Activated CD4-positive, alpha-beta memory T cell treated with anti-CD3 and anti-CD28 coated beads for 36 hours (primary cell): ENCODE measurements at regions of chr12 and their contacts with region 1.

Region 1: DNA sequence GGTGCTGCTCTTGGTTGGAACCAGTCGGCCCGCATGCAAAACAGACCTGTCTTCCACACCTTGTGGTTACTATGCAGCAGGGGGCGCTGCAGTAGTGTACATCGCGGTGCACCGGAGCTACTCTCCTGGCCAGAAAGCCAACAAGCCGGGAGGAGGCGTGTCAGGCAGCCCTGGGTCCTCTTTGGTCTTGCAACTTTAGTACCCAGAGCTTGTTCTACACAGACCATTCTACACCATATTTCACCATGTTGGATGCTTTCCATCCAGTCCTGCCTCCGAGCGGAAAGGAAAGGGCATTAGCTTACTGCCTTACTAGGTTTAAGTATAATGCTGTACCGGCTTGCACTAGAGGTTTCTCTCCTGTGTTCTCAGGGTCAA is 927 bp upstream of the TMTC2 start:
- DNase-seq: peak; percentile 95
- H3K4me3 Mint-ChIP-seq: peak overlapping the region; percentile 86
- H3K27ac Mint-ChIP-seq: peak overlapping the region; percentile 75
- H3K4me1 Mint-ChIP-seq: peaks cover 9% of the 10 kb centered on the region
- H3K27me3 Mint-ChIP-seq: peaks cover 5% of the 10 kb centered on the region

Region 2: DNA sequence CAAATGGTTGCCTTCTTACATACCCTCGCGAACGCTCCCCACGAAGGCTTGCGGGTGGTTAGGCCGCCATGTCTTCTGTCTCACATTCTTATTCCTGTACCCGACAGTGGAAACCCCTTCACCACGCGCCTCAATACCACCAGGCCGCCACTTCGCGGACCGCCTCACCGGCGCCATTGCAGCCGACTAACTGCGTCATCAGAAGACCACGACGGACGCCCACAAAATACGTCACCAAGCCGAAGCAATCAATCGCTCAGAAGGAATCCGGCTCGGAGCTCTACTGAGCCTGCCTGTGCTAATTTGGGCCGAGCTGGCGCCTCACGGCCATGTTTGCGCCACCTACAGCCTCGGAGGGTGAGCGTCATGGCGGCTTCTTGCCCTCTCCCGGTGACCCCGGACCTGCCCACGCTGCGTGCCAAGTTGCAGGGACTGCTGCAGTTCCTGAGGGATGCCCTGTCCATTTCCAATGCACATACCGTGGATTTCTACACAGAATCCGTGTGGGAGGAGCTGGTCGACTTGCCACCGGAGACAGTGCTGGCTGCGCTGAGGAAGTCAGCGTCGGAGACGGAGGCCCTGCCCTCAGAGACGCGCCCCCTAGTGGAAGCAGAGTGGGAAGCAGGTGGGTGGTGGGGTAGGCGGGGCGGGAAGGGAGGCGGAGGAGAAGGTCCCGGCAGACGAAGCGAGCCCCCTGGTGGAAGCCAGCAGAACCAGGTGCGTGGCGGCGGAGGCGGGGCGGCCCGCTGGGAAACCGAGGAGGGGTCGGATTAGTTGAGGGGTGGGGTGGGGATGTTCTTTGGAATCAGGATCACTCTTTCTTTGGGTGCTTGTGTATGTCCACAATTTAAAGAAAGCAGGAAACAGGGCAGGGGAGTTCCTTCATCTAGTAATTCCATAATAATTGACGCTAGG is 327.3 kb before region 1 on chr12 and contains the starts of genes CCDC59 and METTL25:
- CTCF ChIA-PET with region 1: interaction called, 9 read pairs
- POLR2A ChIA-PET with region 1: interaction called, 4 read pairs
- intact Hi-C with region 1: loop called (anchors 1 kb)
- DNase-seq: peak; percentile 98
- H3K4me3 Mint-ChIP-seq: peak within 1 kb of the TSS; percentile 98
- H3K27ac Mint-ChIP-seq: peak within 1 kb of the TSS; percentile 97
- H3K4me1 Mint-ChIP-seq: peaks cover 44% of the 10 kb centered on the region
- H3K27me3 Mint-ChIP-seq: no peaks in the 10 kb centered on the region
- total RNA-seq, gene CCDC59: 77.6 to 77.8 TPM
- total RNA-seq, gene METTL25: 5.2 to 6.2 TPM

Region 3: DNA sequence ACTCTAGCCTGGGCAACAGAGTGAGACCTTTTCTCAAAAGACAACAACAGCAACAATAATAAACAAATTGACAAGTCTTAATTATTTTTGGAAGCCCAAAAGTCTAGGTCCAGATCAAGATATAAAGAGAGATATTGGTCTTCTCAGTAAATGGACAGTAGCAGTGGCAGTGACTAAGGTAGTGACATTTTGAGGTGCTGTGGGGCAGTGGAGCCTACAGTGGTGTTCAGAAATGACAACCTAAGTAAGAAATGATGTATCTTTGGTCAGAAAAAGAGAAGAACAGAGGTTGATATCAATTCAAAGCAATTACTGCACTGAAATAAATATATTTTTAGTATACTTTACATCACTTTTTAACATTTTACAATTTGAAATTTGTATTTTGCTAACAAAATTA is 306.8 kb before region 1 on chr12:
- CTCF ChIA-PET with region 1: no interaction called
- POLR2A ChIA-PET with region 1: no interaction called
- intact Hi-C with region 1: no loop called
- DNase-seq: no peak
- H3K4me3 Mint-ChIP-seq: no peak overlapping the region
- H3K27ac Mint-ChIP-seq: no peak overlapping the region
- H3K4me1 Mint-ChIP-seq: no peaks in the 10 kb centered on the region
- H3K27me3 Mint-ChIP-seq: no peaks in the 10 kb centered on the region

Region 4: DNA sequence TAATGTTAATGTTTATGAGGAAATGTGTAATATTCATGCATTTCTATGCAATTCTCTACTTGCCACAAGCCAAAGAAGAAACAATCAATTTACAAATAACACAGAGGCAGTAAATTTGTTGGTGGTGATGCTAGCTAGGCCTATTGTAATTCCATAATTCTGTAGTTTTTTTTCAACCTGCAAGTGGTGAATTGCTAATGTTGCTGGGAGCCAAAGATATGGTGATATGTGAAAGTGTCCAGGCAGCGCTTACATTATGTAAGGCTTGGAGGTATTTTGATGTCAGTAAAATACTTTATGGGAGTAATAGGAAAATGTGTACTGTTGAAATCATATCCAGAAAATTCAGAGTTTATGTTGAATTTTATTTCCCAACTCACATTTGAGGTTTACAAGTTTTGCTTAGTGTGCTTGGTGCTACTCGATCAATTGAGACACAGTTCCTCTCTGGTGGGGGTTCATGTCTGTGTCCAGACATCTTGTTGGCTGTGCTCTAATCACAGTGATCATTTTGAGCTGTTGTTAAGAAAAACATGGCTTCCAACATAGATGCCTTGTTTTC is 24.1 kb after region 1 on chr12:
- CTCF ChIA-PET with region 1: interaction called, 10 read pairs
- POLR2A ChIA-PET with region 1: no interaction called
- intact Hi-C with region 1: no loop called
- DNase-seq: no peak
- H3K4me3 Mint-ChIP-seq: no peak overlapping the region
- H3K27ac Mint-ChIP-seq: no peak overlapping the region
- H3K4me1 Mint-ChIP-seq: peaks cover 3% of the 10 kb centered on the region
- H3K27me3 Mint-ChIP-seq: no peaks in the 10 kb centered on the region

Region 5: DNA sequence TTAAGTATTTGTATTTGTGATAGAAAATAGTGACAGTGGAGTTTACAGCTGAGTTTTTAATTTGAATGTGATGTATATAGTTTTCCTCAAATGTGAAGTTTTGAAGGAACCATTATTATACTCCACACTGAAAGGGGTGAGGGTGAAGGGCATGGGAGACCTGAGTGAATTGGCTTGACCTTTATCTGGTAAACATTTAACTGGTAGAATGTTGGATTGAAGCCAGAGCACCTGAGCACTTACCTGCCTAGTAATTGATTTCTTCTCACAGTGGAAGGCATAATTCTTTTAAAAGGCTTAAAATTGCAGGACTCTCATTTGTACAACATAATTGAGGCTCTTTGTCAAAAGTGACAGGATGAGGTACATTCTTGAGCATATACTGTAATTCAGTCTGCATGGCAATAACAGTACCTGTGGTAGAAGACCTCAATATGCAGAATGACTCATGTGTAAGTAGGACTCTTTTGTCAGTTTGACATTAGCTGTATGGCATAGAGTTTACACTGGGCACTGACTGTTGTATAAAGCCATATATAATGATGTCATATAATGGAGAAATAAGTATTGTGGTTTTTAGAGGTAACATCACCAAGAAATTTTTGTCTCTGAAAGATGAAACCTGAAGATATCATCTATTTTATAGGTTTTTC is 310.5 kb after region 1 on chr12:
- CTCF ChIA-PET with region 1: interaction called, 3 read pairs
- POLR2A ChIA-PET with region 1: no interaction called
- intact Hi-C with region 1: loop called (anchors 2 kb)
- DNase-seq: no peak
- H3K4me3 Mint-ChIP-seq: no peak overlapping the region
- H3K27ac Mint-ChIP-seq: no peak overlapping the region
- H3K4me1 Mint-ChIP-seq: no peaks in the 10 kb centered on the region
- H3K27me3 Mint-ChIP-seq: no peaks in the 10 kb centered on the region

Region 6: DNA sequence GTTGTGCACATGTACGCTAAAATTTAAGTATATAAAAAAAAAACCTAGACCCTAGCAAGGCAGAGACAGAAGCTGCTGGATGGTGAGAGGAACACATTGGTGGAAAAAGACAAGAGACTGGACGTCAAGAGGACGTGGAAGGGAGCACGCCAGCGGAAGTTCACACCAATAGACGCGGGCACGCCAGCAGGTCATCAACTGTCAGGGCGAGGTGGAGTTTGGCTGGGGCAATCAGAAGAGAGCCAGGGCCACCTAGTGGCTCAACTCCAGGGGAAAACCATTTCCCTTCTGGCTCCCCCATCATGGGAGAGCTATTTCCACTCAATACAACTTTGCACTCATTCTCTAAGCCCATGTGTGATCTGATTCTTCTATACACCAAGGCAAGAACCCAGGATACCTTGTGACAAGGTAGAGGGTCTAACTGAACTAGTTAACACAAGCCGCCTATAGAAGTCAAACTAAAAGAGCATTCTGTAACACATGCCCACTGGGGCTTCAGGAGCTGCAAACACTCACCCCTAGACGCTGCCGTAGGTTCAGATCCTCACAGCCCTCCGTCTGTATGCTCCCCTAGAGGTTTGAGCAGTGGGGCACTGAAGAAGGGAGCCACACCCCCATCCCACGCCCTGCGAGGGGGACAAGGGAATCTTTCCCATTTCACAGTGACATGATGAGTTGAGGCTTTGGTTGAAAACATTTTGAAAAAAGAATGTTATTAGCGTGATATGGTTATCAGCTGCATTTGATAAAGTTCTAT is 703.6 kb after region 1 on chr12:
- CTCF ChIA-PET with region 1: interaction called, 10 read pairs
- POLR2A ChIA-PET with region 1: no interaction called
- intact Hi-C with region 1: no loop called
- DNase-seq: peak; percentile 16
- H3K4me3 Mint-ChIP-seq: no peak overlapping the region
- H3K27ac Mint-ChIP-seq: no peak overlapping the region
- H3K4me1 Mint-ChIP-seq: no peaks in the 10 kb centered on the region
- H3K27me3 Mint-ChIP-seq: no peaks in the 10 kb centered on the region

Region 7: DNA sequence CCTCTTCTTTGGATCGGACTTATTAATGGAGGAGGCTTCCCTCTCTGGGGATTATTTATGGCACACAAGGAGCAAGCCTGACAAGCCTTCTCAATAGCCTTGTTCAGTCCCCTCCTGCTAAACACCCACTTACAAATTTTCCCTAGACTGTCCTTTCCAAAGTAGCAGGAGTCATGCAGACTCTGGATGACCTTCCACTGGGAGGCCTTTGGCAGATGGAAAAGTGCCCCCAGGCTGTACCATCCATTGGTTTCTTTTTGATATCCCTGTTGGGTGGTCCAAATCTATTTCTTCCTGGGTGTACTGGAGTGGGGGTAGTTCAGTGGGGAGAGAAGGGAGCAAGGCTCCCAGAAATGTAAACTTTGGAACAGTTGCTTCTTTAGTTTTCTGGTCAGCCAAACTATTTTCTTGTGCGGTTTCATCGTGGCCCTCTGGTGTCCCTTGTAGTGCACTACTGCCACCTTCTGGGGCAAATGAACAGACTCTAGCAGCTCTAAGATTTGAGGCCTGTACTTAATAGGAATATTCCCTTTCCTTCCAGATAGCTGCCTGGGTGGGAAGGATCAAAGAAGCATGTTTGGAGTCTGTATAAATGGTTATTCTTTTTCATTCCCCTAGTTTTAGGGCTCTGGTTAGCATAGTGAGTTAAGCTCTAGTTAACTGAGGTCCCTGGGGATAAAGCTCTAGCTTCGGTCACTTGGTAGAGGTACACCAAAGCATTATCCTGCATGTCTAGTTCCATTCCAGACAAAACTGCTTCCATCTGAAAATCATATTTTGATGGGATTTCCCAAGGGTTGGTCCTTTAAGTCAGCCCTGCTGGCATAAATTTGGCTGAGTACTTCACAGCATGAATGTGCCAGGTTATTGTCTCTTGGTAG is 1817.4 kb after region 1 on chr12:
- CTCF ChIA-PET with region 1: interaction called, 7 read pairs
- POLR2A ChIA-PET with region 1: no interaction called
- intact Hi-C with region 1: loop called (anchors 1 kb)
- DNase-seq: peak; percentile 31
- H3K4me3 Mint-ChIP-seq: no peak overlapping the region
- H3K27ac Mint-ChIP-seq: no peak overlapping the region
- H3K4me1 Mint-ChIP-seq: no peaks in the 10 kb centered on the region
- H3K27me3 Mint-ChIP-seq: no peaks in the 10 kb centered on the region